Activated CD4-positive, alpha-beta T cell treated with anti-CD3 and anti-CD28 coated beads for 36 hours (primary cell): ENCODE measurements at regions of chr16 and their contacts with region 1.

Region 1: DNA sequence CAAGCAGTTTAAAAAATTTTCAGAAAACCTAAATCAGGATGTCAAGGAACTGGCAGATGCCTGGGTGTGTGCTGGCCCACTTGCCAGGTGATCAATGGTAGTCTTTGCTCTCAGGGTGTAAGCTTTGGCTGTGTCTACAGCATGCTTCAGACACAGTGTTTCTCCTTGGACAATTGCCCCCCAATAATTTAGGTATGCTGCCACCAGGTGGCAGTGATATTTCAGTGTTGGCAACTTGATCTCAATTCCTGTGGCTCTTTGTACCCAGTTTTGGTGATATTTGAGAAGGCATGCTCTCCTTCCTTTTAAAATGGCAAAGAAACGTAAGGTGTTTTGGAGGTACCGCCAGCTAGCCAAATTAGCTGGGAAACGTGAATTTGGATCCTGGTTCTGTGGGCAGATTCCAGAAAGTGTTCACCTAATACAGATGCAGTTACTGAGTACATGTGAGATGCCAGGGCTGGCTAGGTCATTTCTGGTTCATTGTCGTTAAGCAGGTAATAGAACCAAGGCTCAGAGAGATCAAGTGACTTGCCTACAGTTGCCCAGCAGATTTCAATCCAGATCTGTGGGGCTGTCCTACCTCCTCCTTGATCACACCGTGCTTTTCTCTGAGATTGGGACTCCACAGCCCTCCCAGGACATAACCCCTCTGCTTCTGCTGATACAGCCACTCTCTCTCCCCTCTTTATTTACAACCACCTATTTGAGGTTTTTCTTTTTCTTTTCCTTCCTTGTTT is 155.6 kb upstream of the PLCG2 start:
- DNase-seq: peak; percentile 76
- ATAC-seq: no peak
- H3K4me3 Mint-ChIP-seq: no peak overlapping the region
- H3K27ac Mint-ChIP-seq: peak overlapping the region; percentile 23
- H3K4me1 Mint-ChIP-seq: peaks cover 9% of the 10 kb centered on the region
- H3K27me3 Mint-ChIP-seq: no peaks in the 10 kb centered on the region

Region 2: DNA sequence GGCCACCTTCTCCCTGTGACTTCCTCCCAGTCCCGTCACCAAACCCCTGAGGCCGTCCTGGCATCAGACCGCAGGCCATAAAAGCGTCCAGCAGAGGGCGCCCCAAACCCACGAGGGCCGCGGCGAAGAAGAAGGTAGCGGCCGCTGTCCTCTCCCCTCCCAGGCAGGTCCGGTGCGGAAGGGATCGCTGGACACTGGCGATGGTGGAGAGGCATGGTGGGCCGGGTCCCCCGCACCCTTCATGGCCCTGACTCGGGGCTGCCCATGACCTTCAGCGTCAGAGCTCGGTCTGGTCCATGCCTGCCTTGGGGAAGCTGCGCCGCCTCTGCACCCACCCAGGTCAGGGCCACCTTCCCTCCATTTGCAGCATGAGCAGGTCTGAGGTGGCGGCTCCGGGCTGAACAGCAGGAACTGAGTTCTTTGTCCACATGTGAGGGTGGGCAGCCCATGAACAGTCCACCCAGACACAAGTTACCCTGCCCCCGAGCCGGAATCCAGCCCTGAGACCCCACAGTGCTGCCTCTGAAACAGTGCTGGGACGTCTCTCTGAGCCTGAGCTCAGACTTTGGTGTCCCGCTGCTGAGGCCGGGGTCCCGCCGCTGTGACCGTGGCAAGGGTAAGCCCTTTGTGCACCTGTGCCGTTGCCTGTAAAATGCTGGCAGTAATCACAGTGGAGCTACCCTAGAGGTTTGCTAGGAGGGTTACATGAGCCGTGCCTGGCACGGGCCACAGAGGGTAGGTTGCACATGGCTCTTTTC is 219.7 kb before region 1 on chr16:
- CTCF ChIA-PET with region 1: interaction called, 4 read pairs
- POLR2A ChIA-PET with region 1: no interaction called
- intact Hi-C with region 1: loop called (anchors 1 to 5 kb)
- DNase-seq: peak; percentile 92
- ATAC-seq: peak; percentile 98
- H3K4me3 Mint-ChIP-seq: no peak overlapping the region
- H3K27ac Mint-ChIP-seq: no peak overlapping the region
- H3K4me1 Mint-ChIP-seq: no peaks in the 10 kb centered on the region
- H3K27me3 Mint-ChIP-seq: peaks cover 1% of the 10 kb centered on the region

Region 3: DNA sequence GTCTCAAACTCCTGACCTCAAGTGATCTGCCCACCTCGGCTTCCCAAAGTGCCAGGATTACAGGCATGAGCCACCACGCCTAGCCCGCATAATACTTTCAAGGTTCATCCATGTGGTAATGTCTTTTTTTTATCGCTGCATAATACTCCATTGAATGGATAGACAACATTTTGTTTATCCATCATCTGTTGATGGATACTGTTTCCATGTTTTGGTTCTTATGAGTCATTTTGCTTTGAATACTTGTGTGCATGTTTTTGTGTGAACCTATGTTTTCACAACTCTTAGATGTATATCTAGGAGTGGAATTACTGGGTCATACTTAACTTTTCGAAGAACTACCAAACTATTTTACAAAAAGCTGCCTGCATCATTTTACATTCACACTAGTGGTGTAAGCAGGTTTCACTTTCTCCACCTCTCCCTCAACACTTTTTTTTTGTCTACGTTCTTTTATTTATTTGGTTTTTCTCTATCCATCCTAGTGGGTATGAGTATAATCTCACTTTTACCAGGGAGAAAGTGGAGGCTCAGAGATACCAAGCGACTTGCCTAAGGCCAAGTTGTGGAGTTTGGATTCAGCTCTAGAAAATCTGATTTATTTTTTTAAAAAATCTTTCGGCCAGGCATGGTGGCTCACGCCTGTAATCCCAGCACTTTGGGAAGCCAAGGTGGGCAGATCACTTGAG is 27.8 kb before region 1 on chr16:
- CTCF ChIA-PET with region 1: no interaction called
- POLR2A ChIA-PET with region 1: no interaction called
- intact Hi-C with region 1: loop called in 1 of 2 experiments (anchors 1 kb)
- DNase-seq: no peak
- ATAC-seq: peak; percentile 69
- H3K4me3 Mint-ChIP-seq: no peak overlapping the region
- H3K27ac Mint-ChIP-seq: peak overlapping the region; percentile 51
- H3K4me1 Mint-ChIP-seq: peaks cover 22% of the 10 kb centered on the region
- H3K27me3 Mint-ChIP-seq: no peaks in the 10 kb centered on the region

Region 4: GRCh38 chr16:81696961-81697615 is 73.6 kb after region 1 on chr16:
- CTCF ChIA-PET with region 1: interaction called, 9 read pairs
- POLR2A ChIA-PET with region 1: no interaction called
- intact Hi-C with region 1: loop called (anchors 1 kb)
- DNase-seq: peak; percentile 77
- ATAC-seq: peak; percentile 68
- H3K4me3 Mint-ChIP-seq: no peak overlapping the region
- H3K27ac Mint-ChIP-seq: no peak overlapping the region
- H3K4me1 Mint-ChIP-seq: no peaks in the 10 kb centered on the region
- H3K27me3 Mint-ChIP-seq: no peaks in the 10 kb centered on the region

Region 5: DNA sequence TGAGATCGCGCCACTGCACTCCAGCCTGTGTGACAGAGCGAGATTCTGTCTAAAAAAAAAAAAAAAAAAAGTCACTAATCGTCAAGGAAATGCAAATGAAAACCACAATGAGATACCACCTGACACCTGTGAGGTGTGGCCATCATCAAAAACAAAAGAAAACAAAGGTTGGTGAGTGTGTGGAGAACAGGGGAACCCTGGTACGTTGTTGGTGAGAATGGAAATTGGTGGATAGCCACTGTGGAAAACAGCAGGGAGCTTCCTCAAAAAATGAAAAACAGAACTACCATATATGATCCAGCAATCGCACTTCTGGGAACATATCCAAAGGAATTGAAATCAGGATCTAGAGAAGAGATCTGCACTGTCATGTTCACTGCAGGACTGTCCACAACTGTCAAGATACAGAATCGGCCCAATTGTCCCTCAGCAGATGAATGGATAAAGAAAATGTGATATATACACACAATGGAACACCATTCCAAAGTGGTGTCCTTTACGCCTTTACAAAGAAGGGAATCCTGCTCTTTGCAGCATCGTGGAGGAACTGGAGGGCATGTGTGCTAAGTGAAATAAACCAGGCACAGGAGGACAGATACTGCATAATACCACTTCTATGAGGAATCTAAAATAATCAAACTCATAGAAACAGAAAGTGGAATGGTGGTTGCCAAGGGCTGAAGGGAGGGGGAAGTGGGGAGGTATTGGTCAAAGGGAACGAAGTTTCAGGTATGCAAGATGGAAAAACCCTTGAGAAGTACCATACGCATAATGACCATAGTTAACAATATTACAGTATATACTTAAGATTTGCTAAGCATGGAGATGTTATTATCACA is 92.0 kb after region 1 on chr16:
- CTCF ChIA-PET with region 1: interaction called, 12 read pairs
- POLR2A ChIA-PET with region 1: no interaction called
- intact Hi-C with region 1: no loop called
- DNase-seq: no peak
- ATAC-seq: peak; percentile 33
- H3K4me3 Mint-ChIP-seq: no peak overlapping the region
- H3K27ac Mint-ChIP-seq: peak overlapping the region; percentile 74
- H3K4me1 Mint-ChIP-seq: peaks cover 47% of the 10 kb centered on the region
- H3K27me3 Mint-ChIP-seq: no peaks in the 10 kb centered on the region

Region 6: GRCh38 chr16:81723098-81723723 is 99.7 kb after region 1 on chr16:
- CTCF ChIA-PET with region 1: interaction called, 31 read pairs
- POLR2A ChIA-PET with region 1: no interaction called
- intact Hi-C with region 1: loop called (anchors 1 kb)
- DNase-seq: peak; percentile 47
- ATAC-seq: peak; percentile 79
- H3K4me3 Mint-ChIP-seq: no peak overlapping the region
- H3K27ac Mint-ChIP-seq: no peak overlapping the region
- H3K4me1 Mint-ChIP-seq: peaks cover 13% of the 10 kb centered on the region
- H3K27me3 Mint-ChIP-seq: no peaks in the 10 kb centered on the region

Region 7: DNA sequence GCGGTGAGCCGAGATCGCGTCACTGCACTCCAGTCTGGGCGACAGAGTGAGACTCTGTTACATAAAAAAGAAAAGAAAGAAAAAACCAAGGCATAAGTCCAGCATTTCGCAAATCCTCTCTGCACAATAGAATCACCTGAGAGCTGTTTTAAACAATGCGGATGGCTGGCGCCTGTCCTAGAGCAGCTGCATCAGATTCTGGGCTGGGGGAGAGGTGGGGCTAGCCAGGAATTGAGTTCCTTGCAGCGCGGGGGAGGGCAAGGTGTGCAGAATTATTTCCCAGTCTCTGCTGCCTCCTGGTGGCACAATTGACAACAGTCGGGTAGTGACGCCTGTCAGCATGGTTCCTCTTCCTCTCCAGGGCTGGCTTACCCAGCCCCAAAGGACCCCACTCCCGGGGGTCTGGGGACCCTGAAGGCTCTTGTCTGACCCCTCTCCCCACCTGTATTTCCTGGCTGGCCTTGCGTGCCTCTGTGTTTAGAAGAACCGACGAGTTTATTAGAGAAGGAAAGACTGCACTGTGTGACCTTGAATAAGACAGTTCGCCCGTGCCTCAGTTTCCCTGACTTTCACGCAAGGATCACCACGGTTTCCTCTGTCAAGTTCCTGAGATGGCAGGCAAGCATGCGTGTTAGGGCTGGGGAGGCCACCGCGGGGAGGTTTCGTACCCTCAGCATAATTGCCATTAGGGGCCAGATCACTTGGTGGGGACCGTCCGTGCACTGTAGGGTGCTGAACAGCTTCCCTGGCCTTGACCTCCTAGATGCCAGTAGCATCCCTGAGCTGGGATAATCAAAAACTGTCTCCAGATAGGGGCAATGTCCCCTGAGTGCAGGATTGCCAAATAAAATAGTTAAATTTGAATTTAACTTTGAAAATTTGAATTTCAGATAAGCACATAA is 114.6 kb after region 1 on chr16:
- CTCF ChIA-PET with region 1: interaction called, 4 read pairs
- POLR2A ChIA-PET with region 1: no interaction called
- intact Hi-C with region 1: loop called in 1 of 2 experiments (anchors 1 kb)
- DNase-seq: peak; percentile 93
- ATAC-seq: peak; percentile 98
- H3K4me3 Mint-ChIP-seq: peak overlapping the region; percentile 55
- H3K27ac Mint-ChIP-seq: peak overlapping the region; percentile 51
- H3K4me1 Mint-ChIP-seq: no peaks in the 10 kb centered on the region
- H3K27me3 Mint-ChIP-seq: no peaks in the 10 kb centered on the region